Activated T-helper 1 cell treated with anti-CD3 and anti-CD28 coated beads, Interleukin-12 subunit alpha, Interleukin-12 subunit beta, Interleukin-2, Interleukin-4 antibody, amounts not matched to agents 30 ng/mL and 10 ng/mL and 1 ng/mL, durations not matched to agents 14 hours and 24 hours and 36 hours (primary cell): ENCODE measurements at regions of chr5 and their contacts with region 1.

Region 1: DNA sequence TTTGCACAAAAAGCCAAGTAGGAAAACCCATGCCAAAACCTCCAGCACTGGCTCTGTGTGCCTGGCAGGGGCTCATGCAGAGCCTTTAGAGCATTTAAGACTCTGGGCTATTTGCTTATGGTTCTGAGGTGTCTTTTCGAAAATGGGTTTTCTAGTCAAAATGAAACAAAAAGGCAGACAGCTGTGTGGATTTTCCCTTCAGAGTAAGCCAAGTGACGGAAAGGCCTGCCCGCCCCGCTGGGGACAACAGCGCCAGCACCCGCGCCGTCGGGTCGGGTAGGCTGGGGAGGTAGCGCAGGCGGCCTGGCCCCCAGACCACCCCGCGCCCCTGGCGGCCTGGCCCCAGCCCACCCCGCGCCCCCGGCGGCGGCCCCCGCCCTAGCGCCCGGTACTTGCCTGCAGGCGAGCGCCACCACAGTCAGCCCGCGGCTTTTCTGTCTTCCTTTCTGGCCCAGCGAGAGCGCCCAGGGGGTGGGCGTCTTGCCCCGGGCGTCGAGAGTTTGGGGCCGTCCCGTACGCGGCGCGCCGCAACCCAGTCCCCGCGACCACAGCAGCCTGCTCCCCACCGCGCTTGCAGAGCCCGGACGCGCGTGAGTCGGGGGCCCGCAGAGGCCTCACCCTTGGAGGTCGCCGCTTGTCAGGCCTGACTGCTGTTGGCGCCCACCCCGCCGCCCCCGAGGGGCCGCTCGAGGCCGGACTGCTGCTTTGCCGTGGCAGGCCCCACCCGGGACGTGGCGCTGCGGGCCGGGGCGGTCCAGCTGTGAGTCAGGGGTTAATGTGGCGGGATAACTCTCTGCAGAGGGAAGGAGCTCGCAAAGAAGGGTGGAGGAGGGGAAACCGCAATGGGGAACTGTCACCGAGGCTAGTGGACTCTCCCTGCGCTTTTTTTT is at the start of gene TICAM2:
- DNase-seq: peak; percentile 65
- H3K4me3 Mint-ChIP-seq: peak within 1 kb of the TSS; percentile 65
- H3K27ac Mint-ChIP-seq: peak within 1 kb of the TSS; percentile 80
- H3K4me1 Mint-ChIP-seq: peaks cover 35% of the 10 kb centered on the region
- H3K27me3 Mint-ChIP-seq: no peaks in the 10 kb centered on the region
- total RNA-seq, gene TICAM2: 0.59 and 1.1 TPM in 2 replicates

Region 2: DNA sequence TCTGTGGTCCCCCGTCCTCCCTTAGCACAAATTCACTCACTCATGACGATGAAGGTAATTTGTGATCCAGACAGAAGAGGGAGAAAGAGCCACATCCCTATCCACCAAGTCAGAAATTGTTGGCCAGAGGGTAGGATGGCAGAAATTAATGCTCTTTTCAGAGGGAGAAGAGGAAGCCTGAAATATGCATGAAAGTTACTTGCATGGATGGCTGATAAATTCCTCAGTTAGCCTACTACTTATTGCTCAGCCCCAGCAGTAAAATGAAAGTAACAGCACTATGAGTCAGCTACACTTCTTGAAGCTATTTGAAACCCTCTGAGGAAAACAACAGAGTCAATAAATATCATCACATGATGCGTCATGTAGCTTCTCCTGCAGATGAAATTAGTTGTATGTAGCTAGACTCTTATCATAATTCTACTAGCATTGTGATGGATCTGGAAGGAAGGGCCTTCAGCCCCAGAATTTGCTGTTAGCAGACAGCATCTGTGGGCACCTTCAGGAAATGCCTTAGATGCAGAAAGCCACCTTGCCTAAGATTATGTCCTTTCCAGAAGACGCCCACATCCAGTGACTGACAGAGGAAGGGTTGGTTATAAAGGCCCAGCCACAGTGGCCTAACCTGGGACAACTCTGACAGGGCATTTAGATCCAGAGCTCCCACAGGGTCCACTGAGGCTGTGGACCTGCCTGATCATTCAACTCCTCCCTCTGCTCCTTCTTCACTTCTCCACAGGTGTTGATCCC is 224.3 kb before region 1 on chr5:
- intact Hi-C with region 1: loop called (anchors 2 kb)
- DNase-seq: no peak
- H3K4me3 Mint-ChIP-seq: no peak overlapping the region
- H3K27ac Mint-ChIP-seq: peak overlapping the region; percentile 5
- H3K4me1 Mint-ChIP-seq: peaks cover 29% of the 10 kb centered on the region
- H3K27me3 Mint-ChIP-seq: peaks cover 3% of the 10 kb centered on the region

Region 3: GRCh38 chr5:115460472-115460871 is 141.5 kb before region 1 on chr5:
- intact Hi-C with region 1: loop called (anchors 1 kb)
- DNase-seq: no peak
- H3K4me3 Mint-ChIP-seq: no peak overlapping the region
- H3K27ac Mint-ChIP-seq: no peak overlapping the region
- H3K4me1 Mint-ChIP-seq: peaks cover 4% of the 10 kb centered on the region
- H3K27me3 Mint-ChIP-seq: peaks cover 17% of the 10 kb centered on the region

Region 4: GRCh38 chr5:115487756-115488155 is 114.2 kb before region 1 on chr5:
- intact Hi-C with region 1: loop called (anchors 2 kb)
- DNase-seq: no peak
- H3K4me3 Mint-ChIP-seq: peak overlapping the region; percentile 12
- H3K27ac Mint-ChIP-seq: peak overlapping the region; percentile 81
- H3K4me1 Mint-ChIP-seq: peaks cover 18% of the 10 kb centered on the region
- H3K27me3 Mint-ChIP-seq: peaks cover under 1% of the 10 kb centered on the region

Region 5: DNA sequence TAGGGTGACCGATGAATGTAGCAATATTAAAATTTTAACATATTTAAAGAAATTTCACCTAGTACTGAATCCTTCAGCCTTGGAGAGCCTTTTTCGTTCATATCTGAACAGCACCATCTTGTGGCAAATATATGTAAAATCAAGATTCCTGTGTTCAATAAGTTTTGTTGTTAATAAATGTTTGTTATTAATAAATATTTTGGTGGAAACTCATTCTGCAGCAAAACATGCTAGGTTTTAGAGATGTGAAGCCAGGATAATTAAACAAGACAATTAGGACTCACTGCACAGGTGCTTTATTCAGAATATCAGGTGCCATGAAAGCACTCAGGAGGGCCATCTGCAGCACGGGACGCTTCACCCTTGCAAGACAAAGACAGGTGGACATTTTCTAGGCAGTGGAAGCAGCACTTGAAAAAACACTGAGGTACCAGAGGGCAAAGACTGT is 15.3 kb before region 1 on chr5:
- intact Hi-C with region 1: loop called (anchors 2 kb)
- DNase-seq: no peak
- H3K4me3 Mint-ChIP-seq: no peak overlapping the region
- H3K27ac Mint-ChIP-seq: no peak overlapping the region
- H3K4me1 Mint-ChIP-seq: peaks cover 2% of the 10 kb centered on the region
- H3K27me3 Mint-ChIP-seq: peaks cover 2% of the 10 kb centered on the region

Region 6: GRCh38 chr5:115616472-115616871 is 14.5 kb after region 1 on chr5:
- intact Hi-C with region 1: loop called (anchors 1 kb)
- DNase-seq: no peak
- H3K4me3 Mint-ChIP-seq: no peak overlapping the region
- H3K27ac Mint-ChIP-seq: no peak overlapping the region
- H3K4me1 Mint-ChIP-seq: peaks cover 8% of the 10 kb centered on the region
- H3K27me3 Mint-ChIP-seq: no peaks in the 10 kb centered on the region

Region 7: DNA sequence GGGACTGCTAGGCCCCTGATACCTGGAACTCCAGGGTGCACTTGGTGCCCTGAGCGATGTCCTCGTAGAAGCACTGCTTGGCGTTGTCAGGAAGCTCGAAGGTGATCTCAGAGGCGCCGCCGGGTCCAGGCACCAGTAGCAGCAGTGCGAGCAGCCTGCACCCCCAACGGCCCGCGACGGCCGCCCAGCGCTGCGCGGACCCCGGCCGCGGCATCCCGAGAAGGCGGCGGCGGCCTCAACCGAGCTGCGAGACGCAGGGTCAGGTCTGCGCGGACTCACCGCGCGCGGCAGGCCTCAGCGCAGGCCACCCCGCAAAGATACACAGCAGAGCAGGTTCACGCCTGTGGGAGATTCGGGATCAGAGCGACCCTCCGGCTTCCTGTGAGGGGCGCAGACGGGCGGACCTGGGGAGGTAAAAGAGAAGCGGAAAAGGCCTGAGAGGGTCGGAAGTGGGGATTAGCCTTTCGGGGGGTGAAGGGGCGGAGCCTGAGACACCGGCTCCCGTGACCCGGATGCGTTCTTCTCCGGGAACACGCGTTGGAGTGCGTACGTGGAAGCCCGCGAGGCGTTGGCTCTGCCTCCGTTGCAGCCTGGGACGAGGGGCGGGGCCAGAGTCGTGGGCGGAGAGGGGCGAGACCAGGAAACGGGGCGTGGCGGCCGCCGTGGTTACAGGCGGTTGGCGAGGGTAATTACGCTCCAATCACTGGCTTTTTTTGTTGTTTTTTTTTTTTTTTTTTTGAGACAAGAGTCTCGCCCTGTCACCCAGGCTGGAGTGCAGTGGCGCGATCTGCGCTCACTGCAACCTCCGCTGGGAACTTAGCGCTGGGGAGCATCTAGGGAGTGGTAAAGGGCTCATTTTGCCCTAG is 23.9 kb after region 1 on chr5 and contains the start of gene TMED7:
- intact Hi-C with region 1: loop called (anchors 1 kb)
- DNase-seq: peak; percentile 99
- H3K4me3 Mint-ChIP-seq: no peak within 1 kb of the TSS
- H3K27ac Mint-ChIP-seq: peak within 1 kb of the TSS; percentile 88
- H3K4me1 Mint-ChIP-seq: peaks cover 32% of the 10 kb centered on the region
- H3K27me3 Mint-ChIP-seq: peaks cover 12% of the 10 kb centered on the region
- total RNA-seq, gene TMED7: 43.4 and 44.0 TPM in 2 replicates